ENCODE measurements at regions of chr3 and their contacts with region 1.

Region 1: GRCh38 chr3:69161587-69162307 is 39.4 kb upstream of the LMOD3 start:
- DNase-seq: peak in 1 of 2 donors; percentile 77
- H3K4me3 ChIP-seq: no peak overlapping the region
- H3K27ac ChIP-seq: no peak overlapping the region
- H3K4me1 ChIP-seq: peaks cover 0 to 6% (median 4%) of the 10 kb centered on the region in 4 donors
- H3K27me3 ChIP-seq: no peaks in the 10 kb centered on the region
- CTCF ChIP-seq: peak in 5 of 7 experiments; percentile 77 to 95 (median 93)
- EP300 ChIP-seq: no peak
- POLR2A ChIP-seq: no peak

Region 2: DNA sequence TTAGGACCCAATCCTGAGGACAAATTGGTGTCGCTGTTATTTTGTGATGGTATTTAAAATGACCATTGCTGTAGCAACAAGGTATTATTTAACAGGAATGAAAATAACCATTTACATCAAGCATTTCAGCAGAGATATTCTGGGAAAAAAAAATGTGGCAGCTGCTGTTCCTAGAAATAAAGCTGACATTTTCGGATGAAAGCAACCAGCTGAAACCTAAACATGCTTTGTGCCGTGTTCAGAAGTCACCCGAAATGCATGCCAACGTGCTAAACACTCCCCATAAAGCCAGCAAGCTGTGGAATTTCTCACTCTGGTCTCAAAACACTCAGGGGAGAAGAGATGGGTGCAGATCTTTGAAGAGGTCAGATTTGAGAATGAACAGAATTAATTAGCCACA is 197.9 kb before region 1 on chr3:
- intact Hi-C with region 1: no loop called
- DNase-seq: no peak
- H3K4me3 ChIP-seq: no peak overlapping the region
- H3K27ac ChIP-seq: no peak overlapping the region
- H3K4me1 ChIP-seq: no peaks in the 10 kb centered on the region
- H3K27me3 ChIP-seq: peaks cover 0 to 9% (median 0%) of the 10 kb centered on the region in 3 donors
- CTCF ChIP-seq: no peak
- EP300 ChIP-seq: no peak
- POLR2A ChIP-seq: no peak

Region 3: DNA sequence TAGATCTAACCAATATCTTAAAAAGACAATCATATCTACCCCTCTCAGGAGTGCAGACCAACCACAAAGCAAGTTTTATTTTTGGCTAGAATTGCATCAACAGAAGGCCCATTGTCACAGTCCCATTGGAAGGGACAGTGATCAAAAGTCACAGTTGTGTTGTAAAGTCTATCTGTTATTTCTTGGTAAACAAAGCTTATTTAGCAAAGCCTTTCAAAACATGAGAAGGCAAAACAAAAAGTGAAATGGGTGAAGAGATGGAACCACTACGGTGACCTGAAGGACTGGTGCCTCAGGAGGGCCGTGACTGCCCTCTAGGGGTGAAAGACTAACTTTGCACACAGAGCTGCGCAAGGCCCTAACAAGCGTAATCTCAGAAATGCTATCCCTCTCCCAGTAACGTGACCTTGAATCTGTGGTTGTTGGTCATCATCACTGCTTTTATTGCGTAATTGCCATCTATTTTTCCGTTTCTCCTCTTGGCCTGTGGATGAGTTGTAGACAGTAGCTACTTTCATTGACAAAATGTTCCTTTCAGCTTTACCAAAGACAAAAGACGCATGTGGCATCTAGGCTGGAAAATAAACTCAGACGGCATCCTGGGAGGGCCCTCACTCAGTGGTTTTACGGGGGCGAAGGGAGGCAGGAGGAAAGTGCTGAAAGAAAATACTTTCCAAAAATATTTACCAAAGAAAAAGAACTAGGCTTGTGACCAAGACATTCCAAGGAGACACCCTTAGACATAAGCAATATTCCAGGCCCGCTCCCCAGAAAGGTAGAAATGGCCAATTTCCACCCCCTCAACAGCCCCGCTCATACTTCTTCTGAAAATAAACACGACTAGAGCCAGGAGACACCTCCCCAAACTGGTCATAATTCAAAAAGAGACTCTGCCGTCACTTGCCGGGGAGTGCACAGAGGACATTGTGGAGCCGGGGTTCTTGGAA is 144.8 kb after region 1 on chr3:
- intact Hi-C with region 1: loop called (anchors 5 kb)
- DNase-seq: peak; percentile 66 to 93
- H3K4me3 ChIP-seq: no peak overlapping the region
- H3K27ac ChIP-seq: peak overlapping the region in 3 of 5 donors; percentile 61 to 82 (median 65)
- H3K4me1 ChIP-seq: peaks cover 0 to 16% (median 8%) of the 10 kb centered on the region in 4 donors
- H3K27me3 ChIP-seq: no peaks in the 10 kb centered on the region
- CTCF ChIP-seq: peak in 5 of 7 experiments; percentile 80 to 89 (median 87)
- EP300 ChIP-seq: no peak
- POLR2A ChIP-seq: no peak

Region 4: GRCh38 chr3:69410250-69410649 is 248.5 kb after region 1 on chr3:
- intact Hi-C with region 1: loop called (anchors 5 kb)
- DNase-seq: peak; percentile 75 to 91
- H3K4me3 ChIP-seq: no peak overlapping the region
- H3K27ac ChIP-seq: peak overlapping the region in 3 of 5 donors; percentile 8 to 17 (median 15)
- H3K4me1 ChIP-seq: peaks cover 0 to 4% (median 0%) of the 10 kb centered on the region in 4 donors
- H3K27me3 ChIP-seq: peaks cover 0 to 6% (median 0%) of the 10 kb centered on the region in 3 donors
- CTCF ChIP-seq: peak in 5 of 7 experiments; percentile 71 to 87 (median 81)
- EP300 ChIP-seq: no peak
- POLR2A ChIP-seq: no peak

Region 5: DNA sequence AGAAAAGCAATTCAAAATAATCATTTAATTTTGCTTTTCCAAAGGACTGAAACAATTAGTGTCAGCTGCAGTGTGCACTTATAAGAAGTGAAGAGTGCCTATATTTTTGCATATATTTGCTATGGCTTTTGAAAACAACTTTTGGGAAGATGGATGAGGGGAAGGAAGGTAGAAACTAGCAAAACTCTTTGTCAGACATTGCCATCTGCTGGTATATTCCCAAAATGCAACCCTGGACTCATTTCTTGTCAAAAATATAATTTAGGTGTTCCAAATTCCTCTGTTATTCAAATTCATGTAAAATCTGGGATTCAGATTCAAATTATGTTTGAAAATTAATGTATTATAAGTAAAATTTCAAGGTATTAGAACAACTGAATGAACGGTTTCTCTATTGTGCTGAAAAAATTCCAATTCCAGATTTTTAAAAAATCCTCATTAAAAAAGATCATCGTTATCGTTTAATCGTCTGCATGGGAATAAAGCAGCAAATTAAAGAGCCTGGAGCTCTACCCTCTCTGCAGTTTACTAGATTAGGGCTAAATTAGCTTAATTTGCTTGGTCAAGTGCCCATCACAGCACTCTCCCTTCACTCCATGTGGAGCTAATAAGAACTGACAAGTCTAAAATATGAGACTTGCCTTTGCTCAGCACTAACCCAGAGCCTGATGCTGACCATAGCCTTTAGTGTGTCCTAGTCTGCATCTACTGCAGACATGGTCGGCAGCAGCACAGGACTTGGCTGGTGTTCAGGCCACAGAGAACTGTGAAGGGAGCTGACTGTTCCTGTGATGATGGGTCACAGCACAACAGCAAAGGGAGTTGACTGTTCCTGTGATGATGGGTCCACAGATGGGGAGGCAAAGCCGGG is 509.6 kb after region 1 on chr3:
- intact Hi-C with region 1: loop called (anchors 10 kb)
- DNase-seq: peak in 1 of 2 donors; percentile 75
- H3K4me3 ChIP-seq: no peak overlapping the region
- H3K27ac ChIP-seq: no peak overlapping the region
- H3K4me1 ChIP-seq: peaks cover 0 to 4% (median 0%) of the 10 kb centered on the region in 4 donors
- H3K27me3 ChIP-seq: no peaks in the 10 kb centered on the region
- CTCF ChIP-seq: peak in 5 of 7 experiments; percentile 41 to 66 (median 60)
- EP300 ChIP-seq: no peak
- POLR2A ChIP-seq: no peak